WTC11 (cell line): ENCODE measurements at regions of chr10 and their contacts with region 1.

Region 1: GRCh38 chr10:99560277-99561126 is 27.8 kb downstream of the NKX2-3 start:
- DNase-seq: peak; percentile 76
- ATAC-seq: peak; percentile 91
- H3K4me3 Mint-ChIP-seq: no peak overlapping the region
- H3K27ac Mint-ChIP-seq: no peak overlapping the region
- H3K4me1 Mint-ChIP-seq: peaks cover 13% of the 10 kb centered on the region
- H3K27me3 Mint-ChIP-seq: no peaks in the 10 kb centered on the region
- CTCF ChIP-seq: peak; percentile 93

Region 2: DNA sequence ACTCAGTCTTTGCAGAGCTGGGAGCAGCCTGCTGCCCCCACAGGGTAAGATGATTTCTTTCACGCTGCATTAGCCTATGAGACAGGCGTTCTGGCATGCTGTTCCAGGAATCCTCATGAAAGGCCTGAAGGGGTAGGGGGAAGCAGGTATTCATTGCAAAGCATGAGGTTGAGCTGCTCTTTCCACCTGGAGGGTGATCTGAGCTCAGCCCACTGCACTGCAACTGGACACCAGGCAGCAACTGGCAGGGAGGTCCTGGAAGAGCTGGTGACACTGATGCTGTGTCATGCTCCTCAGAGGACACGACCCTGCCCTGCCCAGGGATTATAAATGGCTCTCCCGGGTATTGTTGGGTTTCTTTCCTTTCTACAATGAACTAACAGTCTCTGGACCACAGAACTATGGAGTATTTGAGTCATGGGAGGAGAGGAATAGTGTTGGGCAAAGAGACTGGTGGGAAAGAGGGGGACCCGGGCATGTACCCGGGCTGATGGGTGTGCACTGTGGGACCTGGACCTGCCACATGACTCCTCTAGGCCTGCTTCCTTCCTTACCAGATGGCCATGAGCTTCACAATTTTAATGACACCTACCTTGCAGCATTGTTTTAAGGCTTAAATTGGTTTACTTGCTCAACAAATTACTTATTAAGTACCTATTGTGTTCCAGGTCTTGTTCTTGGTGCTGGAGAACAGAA is 35.4 kb after region 1 on chr10:
- CTCF ChIA-PET with region 1: interaction called, 10 read pairs
- POLR2A ChIA-PET with region 1: interaction called, 7 read pairs
- DNase-seq: no peak
- ATAC-seq: peak; percentile 71
- H3K4me3 Mint-ChIP-seq: no peak overlapping the region
- H3K27ac Mint-ChIP-seq: no peak overlapping the region
- H3K4me1 Mint-ChIP-seq: peaks cover 18% of the 10 kb centered on the region
- H3K27me3 Mint-ChIP-seq: no peaks in the 10 kb centered on the region
- CTCF ChIP-seq: no peak

Region 3: DNA sequence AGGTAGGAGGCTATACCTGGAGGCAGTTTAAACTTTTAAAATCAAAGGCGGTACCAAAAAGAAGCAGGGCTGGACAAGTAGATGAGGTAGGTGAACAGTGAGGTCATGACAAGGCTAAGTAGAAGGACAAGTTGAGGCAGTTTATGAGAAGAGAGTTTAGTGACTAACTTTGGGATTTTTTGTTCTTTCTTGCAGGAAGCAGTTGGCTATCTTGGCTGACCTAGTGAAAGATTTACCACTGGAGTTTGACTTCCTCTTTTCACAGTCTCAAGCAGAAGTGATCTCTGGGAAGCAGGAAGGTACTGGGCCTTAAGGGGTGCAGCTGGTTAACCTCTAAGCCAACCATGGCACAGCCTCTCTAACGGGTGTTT is 125.1 kb after region 1 on chr10:
- CTCF ChIA-PET with region 1: no interaction called
- POLR2A ChIA-PET with region 1: no interaction called
- DNase-seq: no peak
- ATAC-seq: no peak
- H3K4me3 Mint-ChIP-seq: no peak overlapping the region
- H3K27ac Mint-ChIP-seq: peak overlapping the region; percentile 33; the same call in 1 of the 2 replicates
- H3K4me1 Mint-ChIP-seq: no peaks in the 10 kb centered on the region
- H3K27me3 Mint-ChIP-seq: no peaks in the 10 kb centered on the region
- CTCF ChIP-seq: no peak